Cardiac septum (tissue), 1 donor: ENCODE measurements at regions of chr2 and their contacts with region 1.

Region 1: GRCh38 chr2:74250189-74250631 is 51.8 kb downstream of the MTHFD2 start:
- DNase-seq: no peak

Region 2: GRCh38 chr2:74147727-74148456 is 102.3 kb before region 1 on chr2 and contains the start of gene BOLA3:
- intact Hi-C with region 1: no loop called
- DNase-seq: peak; percentile 95
- total RNA-seq, gene BOLA3: 69.5 TPM

Region 3: DNA sequence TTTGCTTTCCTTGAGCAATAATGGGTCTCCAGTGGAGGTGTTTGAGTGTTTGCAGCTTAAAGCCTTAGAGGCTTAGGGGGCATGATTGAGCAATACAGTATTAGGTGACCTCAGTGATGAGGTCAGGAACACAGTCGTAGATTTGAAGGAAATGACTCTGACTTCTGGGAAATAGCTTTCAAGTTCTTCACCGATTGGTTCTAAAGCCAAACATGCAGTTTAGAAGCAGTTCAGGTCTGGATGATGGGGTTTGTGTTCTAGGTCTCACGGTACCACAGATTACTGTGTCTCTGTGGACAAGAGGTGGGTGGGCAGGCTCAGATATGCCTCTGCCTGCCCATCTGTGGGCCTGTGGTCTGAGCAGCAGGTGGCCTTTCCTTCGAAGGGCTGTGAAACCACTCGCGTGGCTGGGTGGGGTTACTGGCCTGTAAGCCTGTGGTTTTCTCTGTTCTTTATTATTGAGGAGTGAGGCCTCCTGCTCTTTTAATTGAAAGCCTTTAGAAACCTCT is 44.0 kb before region 1 on chr2:
- intact Hi-C with region 1: no loop called
- DNase-seq: no peak

Region 4: DNA sequence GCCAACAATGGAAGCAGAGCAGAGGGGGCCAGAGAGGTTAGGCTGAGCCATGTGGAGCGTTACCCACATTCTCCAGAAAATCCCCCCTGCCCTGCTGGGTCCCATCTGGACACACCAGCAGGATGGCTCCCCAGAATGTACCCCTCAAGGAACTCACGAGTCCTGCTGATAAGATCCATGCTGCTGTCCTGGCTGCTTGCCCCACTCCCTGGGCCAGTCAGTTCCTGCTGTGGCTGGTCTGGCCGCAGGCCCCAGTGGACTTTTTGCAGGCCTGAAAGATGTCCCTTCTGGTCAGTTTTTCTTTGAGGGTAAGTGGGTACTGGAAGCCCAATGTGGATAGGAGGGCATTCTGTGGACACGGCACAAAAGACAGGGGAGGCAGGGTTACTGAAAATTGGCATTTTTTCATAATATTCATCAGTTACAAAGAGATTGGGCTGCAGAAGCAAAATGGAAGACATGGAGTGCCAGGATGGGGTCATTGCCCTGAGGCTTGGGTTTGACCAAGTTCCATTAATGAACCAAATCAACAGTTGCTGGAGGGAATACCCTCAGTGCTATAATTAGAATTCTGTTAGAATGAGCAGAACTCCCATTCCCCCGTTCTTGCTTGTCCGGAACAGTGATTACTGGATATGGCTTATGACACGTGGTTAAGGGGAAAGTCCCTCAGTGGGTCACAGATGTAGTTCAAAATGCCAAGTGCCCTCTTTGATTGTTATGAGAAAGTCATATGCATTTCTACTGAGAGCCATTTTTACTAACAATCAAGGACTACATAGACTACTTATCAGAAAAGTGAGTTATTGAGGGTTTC is 54.3 kb after region 1 on chr2:
- intact Hi-C with region 1: no loop called
- DNase-seq: no peak

Region 5: GRCh38 chr2:74391580-74392448 is 141.6 kb after region 1 on chr2:
- intact Hi-C with region 1: loop called (anchors 5 kb)
- DNase-seq: peak; percentile 97